ENCODE measurements at regions of chr18 and their contacts with region 1.

Region 1: GRCh38 chr18:30245766-30246455 is 796.6 kb downstream of the DSC3 start:
- DNase-seq: peak in 1 of 2 donors; percentile 4
- H3K4me3 ChIP-seq: no peak overlapping the region
- H3K27ac ChIP-seq: no peak overlapping the region
- H3K4me1 ChIP-seq: no peaks in the 10 kb centered on the region
- H3K27me3 ChIP-seq: no peaks in the 10 kb centered on the region
- CTCF ChIP-seq: no peak
- EP300 ChIP-seq: no peak
- POLR2A ChIP-seq: no peak

Region 2: GRCh38 chr18:30192216-30192615 is 53.7 kb before region 1 on chr18:
- intact Hi-C with region 1: loop called (anchors 5 kb)
- DNase-seq: no peak
- H3K4me3 ChIP-seq: no peak overlapping the region
- H3K27ac ChIP-seq: no peak overlapping the region
- H3K4me1 ChIP-seq: no peaks in the 10 kb centered on the region
- H3K27me3 ChIP-seq: no peaks in the 10 kb centered on the region
- CTCF ChIP-seq: no peak
- EP300 ChIP-seq: no peak
- POLR2A ChIP-seq: no peak

Measured in stomach (tissue), 19 donors.